HepG2 (cell line): ENCODE measurements at regions of chr16 and their contacts with region 1.

Region 1: GRCh38 chr16:2147981-2148671 is at the start of gene RAB26:
- DNase-seq: peak; percentile 82
- ATAC-seq: peak; percentile 63
- H3K4me3 ChIP-seq: peak within 1 kb of the TSS; percentile 47 to 98 (median 53)
- H3K27ac ChIP-seq: peak within 1 kb of the TSS; percentile 32
- H3K4me1 ChIP-seq: peaks cover 72% of the 10 kb centered on the region
- H3K27me3 ChIP-seq: peaks cover 3 to 30% of the 10 kb centered on the region in 2 experiments; a peak in 4 of 5 replicates
- CTCF ChIP-seq: peak; percentile 31
- EP300 ChIP-seq: no peak
- POLR2A ChIP-seq: no peak; a peak in 1 of 4 replicates
- RAD21 ChIP-seq: no peak
- total RNA-seq, gene RAB26: 0.45 and 0.86 TPM in 2 replicates

Region 2: DNA sequence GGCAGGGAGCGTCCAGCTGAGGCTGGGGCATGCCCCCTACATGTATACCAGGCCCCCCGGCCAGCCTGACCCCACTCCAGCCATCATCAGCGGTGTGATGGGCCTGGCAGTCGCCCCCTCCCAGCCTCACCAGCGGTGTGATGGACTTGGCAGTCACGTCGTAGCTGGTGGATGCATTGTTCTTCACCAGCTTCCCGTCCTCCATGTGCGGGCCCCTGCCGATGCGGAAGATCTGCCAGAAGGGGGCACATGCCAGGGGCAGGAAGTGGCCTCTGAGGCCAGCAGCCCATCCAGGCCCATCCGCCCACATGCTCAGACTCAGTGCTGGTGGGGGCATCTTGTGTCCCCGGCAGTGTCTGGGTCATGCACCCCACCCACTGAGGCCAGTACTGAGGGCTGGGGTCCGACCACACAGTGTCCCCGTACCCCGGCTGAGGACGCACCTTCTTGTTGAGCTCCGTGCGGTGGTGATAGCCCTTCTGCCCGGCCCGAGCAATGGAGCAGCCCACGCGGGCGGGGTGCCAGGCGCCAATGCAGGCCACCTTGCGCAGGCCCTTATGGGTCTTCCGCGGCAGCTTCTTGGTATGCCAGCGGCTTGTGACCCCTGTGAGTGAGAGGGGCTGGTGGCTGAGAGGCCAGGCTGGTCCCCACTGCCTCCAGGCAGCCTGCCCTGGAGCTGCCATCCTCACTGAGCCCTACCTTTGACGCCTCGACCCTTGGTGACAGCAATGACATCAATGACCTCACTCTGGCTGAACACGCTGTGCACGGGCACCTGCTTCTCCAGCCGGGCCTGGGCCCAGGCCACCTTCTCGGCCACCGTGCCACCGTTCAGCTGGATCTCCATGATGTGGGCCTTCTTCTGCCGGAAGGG is 201.4 kb before region 1 on chr16:
- CTCF ChIA-PET with region 1: no interaction called
- POLR2A ChIA-PET with region 1: no interaction called
- in situ Hi-C with region 1: no loop called
- intact Hi-C with region 1: no loop called
- DNase-seq: no peak
- ATAC-seq: peak; percentile 42
- H3K4me3 ChIP-seq: no peak overlapping the region
- H3K27ac ChIP-seq: no peak overlapping the region
- H3K4me1 ChIP-seq: peaks cover 38% of the 10 kb centered on the region
- H3K27me3 ChIP-seq: peaks cover 0 to 5% of the 10 kb centered on the region in 2 experiments; a peak in 1 of 5 replicates
- CTCF ChIP-seq: peak; percentile 56
- EP300 ChIP-seq: no peak
- POLR2A ChIP-seq: no peak
- RAD21 ChIP-seq: no peak; the same call in 1 of the 2 replicates

Region 3: GRCh38 chr16:2082160-2082982 is 65.8 kb before region 1 on chr16:
- CTCF ChIA-PET with region 1: no interaction called
- POLR2A ChIA-PET with region 1: no interaction called
- in situ Hi-C with region 1: loop called (anchors 10 kb)
- intact Hi-C with region 1: no loop called
- DNase-seq: no peak
- ATAC-seq: no peak
- H3K4me3 ChIP-seq: no peak overlapping the region
- H3K27ac ChIP-seq: no peak overlapping the region
- H3K4me1 ChIP-seq: no peaks in the 10 kb centered on the region
- H3K27me3 ChIP-seq: no peaks in the 10 kb centered on the region
- CTCF ChIP-seq: no peak
- EP300 ChIP-seq: no peak
- POLR2A ChIP-seq: no peak
- RAD21 ChIP-seq: no peak